Aorta (tissue), 5 donors: ENCODE measurements at regions of chr1 and their contacts with region 1.

Region 1: GRCh38 chr1:16009030-16009709 is 5.1 kb downstream of the SRARP start:
- DNase-seq: peak; percentile 85 to 94
- ATAC-seq: peak; percentile 64
- H3K4me3 ChIP-seq: no peak overlapping the region
- H3K27ac ChIP-seq: no peak overlapping the region
- H3K4me1 ChIP-seq: no peaks in the 10 kb centered on the region
- H3K27me3 ChIP-seq: no peaks in the 10 kb centered on the region

Region 2: DNA sequence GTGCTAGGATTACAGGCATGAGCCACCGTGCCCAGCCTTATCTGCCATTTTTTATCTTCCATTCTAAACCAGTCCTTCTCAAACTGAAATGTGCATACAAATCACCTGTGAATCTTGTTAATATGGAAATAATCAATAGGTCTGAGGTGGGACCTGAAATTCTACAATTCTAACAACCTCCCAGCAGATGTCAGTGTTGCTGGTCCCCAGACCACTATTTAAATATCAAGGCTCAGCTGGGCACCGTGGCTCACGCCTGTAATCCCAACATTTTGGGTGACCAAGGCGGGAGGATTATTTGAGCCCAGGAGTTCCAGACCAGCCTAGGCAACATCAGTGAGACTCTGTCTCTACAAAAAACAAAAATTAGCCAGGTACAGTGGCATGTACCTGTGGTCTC is 205.8 kb before region 1 on chr1:
- intact Hi-C with region 1: no loop called
- DNase-seq: peak in 1 of 2 donors; percentile 70
- ATAC-seq: no peak
- H3K4me3 ChIP-seq: no peak overlapping the region
- H3K27ac ChIP-seq: no peak overlapping the region
- H3K4me1 ChIP-seq: peaks cover 0 to 5% of the 10 kb centered on the region in 2 donors
- H3K27me3 ChIP-seq: no peaks in the 10 kb centered on the region

Region 3: GRCh38 chr1:16032388-16033103 is 23.4 kb after region 1 on chr1:
- intact Hi-C with region 1: loop called (anchors 1 kb)
- DNase-seq: peak; percentile 90 to 95
- ATAC-seq: peak; percentile 94
- H3K4me3 ChIP-seq: no peak overlapping the region
- H3K27ac ChIP-seq: no peak overlapping the region
- H3K4me1 ChIP-seq: no peaks in the 10 kb centered on the region
- H3K27me3 ChIP-seq: no peaks in the 10 kb centered on the region

Region 4: GRCh38 chr1:16048573-16049189 is 39.5 kb after region 1 on chr1:
- intact Hi-C with region 1: loop called in 1 of 2 experiments (anchors 5 kb)
- DNase-seq: peak in 1 of 2 donors; percentile 86
- ATAC-seq: peak; percentile 26
- H3K4me3 ChIP-seq: peak overlapping the region in 1 of 2 donors; percentile 5
- H3K27ac ChIP-seq: no peak overlapping the region
- H3K4me1 ChIP-seq: no peaks in the 10 kb centered on the region
- H3K27me3 ChIP-seq: no peaks in the 10 kb centered on the region

Region 5: GRCh38 chr1:16055613-16056520 is 46.7 kb after region 1 on chr1:
- intact Hi-C with region 1: loop called (anchors 1 to 5 kb)
- DNase-seq: peak; percentile 89 to 94
- ATAC-seq: peak; percentile 81
- H3K4me3 ChIP-seq: no peak overlapping the region
- H3K27ac ChIP-seq: no peak overlapping the region
- H3K4me1 ChIP-seq: no peaks in the 10 kb centered on the region
- H3K27me3 ChIP-seq: no peaks in the 10 kb centered on the region